Prostate gland (tissue), 2 donors: ENCODE measurements at regions of chr7 and their contacts with region 1.

Region 1: GRCh38 chr7:94289071-94289470 is 105.6 kb upstream of the COL1A2 start:
- DNase-seq: peak; percentile 32
- H3K4me3 ChIP-seq: no peak overlapping the region
- H3K27ac ChIP-seq: no peak overlapping the region
- H3K4me1 ChIP-seq: no peaks in the 10 kb centered on the region
- H3K27me3 ChIP-seq: peaks cover 2% of the 10 kb centered on the region
- CTCF ChIP-seq: peak; percentile 31 to 77 (median 66)
- POLR2A ChIP-seq: no peak

Region 2: DNA sequence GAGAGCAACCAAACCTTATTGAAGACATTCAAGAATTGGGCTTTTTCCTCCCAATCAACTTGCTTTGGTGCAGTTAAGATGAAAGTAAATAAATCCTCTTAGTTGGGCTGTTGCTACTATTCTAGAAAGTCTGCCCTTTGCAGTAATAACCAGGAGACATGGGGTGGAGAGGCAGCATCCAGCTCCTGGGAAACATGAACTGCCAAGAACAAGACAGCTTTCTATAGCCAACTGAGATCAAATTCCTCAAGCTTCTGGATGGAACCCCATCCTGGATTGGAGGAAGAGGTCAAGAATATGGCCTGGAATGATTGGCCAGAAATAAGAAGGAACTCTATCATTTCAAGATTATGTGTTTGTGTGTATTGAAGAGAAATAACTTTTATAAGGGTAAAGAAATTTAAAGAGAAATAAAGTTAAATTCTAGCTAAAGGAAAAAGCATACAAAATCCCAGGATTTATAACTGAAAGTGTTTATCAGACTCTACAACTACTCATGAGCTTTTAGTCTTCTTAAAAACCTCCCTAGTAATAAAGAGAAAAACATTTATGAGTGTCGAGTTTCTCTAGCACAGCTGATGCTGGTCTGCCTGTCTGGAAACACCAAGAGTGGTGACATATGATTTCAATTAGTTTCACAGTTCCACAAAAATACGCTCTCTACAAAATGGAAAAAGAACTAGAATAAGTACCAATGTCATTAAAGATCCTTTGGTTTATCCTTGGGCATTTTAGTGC is 35.5 kb after region 1 on chr7:
- intact Hi-C with region 1: no loop called
- DNase-seq: no peak
- H3K4me3 ChIP-seq: no peak overlapping the region
- H3K27ac ChIP-seq: peak overlapping the region in 1 of 2 donors; percentile 26
- H3K4me1 ChIP-seq: no peaks in the 10 kb centered on the region
- H3K27me3 ChIP-seq: no peaks in the 10 kb centered on the region
- CTCF ChIP-seq: no peak
- POLR2A ChIP-seq: no peak

Region 3: DNA sequence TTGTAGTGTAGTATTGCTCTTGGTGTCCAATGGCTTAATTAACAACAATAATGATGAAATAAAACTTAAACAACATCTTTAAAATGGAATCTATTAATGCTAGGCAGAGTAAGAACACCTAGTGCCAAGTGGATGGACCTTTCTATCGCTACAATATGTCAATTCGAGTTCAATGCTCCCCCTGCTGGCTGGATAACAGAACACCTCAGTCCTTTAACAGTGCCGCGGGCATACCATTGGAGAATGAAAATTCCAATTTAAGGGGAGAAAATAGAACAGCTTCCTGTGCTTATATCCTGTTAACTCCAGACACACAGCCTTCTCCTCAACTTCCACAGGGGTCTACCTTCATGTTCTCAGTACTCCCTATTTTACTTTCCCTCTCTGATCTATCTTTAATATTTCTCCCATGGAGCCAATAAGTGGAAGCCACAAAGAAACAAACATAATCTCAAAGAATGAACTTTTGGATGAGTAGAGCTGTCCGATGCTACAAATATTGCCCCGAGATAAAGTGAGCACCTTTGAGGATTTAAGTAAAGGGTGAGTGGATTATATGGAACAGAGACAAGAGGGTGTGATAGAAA is 147.0 kb after region 1 on chr7:
- intact Hi-C with region 1: loop called (anchors 1 kb)
- DNase-seq: peak; percentile 70
- H3K4me3 ChIP-seq: no peak overlapping the region
- H3K27ac ChIP-seq: no peak overlapping the region
- H3K4me1 ChIP-seq: no peaks in the 10 kb centered on the region
- H3K27me3 ChIP-seq: no peaks in the 10 kb centered on the region
- CTCF ChIP-seq: peak; percentile 28 to 69 (median 62)
- POLR2A ChIP-seq: no peak

Region 4: DNA sequence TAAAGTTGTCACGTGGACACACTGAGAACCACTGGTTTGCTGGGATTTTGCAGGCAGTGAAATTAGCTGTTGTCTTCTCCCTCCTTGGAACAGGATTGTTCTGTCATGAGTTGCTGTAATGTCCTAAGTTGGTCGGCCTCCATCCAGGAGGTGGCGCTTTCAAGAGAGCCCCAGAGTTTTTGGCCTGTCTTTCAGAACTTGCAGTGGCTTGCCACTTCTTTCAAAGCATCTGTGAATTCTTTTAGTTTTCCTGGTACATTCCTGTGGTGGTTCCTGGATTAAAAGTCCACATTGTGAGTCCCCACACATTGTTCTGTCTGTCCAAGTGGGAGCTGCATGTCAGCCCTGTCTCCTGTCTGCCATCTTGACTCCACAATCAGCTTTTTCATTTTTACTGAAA is 901.4 kb after region 1 on chr7:
- intact Hi-C with region 1: loop called (anchors 5 kb)
- DNase-seq: no peak
- H3K4me3 ChIP-seq: no peak overlapping the region
- H3K27ac ChIP-seq: no peak overlapping the region
- H3K4me1 ChIP-seq: no peaks in the 10 kb centered on the region
- H3K27me3 ChIP-seq: no peaks in the 10 kb centered on the region
- CTCF ChIP-seq: no peak
- POLR2A ChIP-seq: no peak